T-cell (primary cell): ENCODE measurements at regions of chr1 and their contacts with region 1.

Region 1: GRCh38 chr1:95057351-95057750 is 15.4 kb downstream of the ALG14 start:
- DNase-seq: no peak
- ATAC-seq: no peak
- H3K4me3 ChIP-seq: no peak overlapping the region
- H3K4me3 Mint-ChIP-seq: no peak overlapping the region
- H3K27ac ChIP-seq: no peak overlapping the region
- H3K27ac Mint-ChIP-seq: no peak overlapping the region
- H3K4me1 ChIP-seq: no peaks in the 10 kb centered on the region
- H3K4me1 Mint-ChIP-seq: peaks cover 0 to 6% (median 0%) of the 10 kb centered on the region in 3 donors
- H3K27me3 ChIP-seq: no peaks in the 10 kb centered on the region
- H3K27me3 Mint-ChIP-seq: no peaks in the 10 kb centered on the region

Region 2: GRCh38 chr1:94989911-94990473 is 67.4 kb before region 1 on chr1:
- CTCF ChIA-PET with region 1: no interaction called
- POLR2A ChIA-PET with region 1: no interaction called
- DNase-seq: no peak
- ATAC-seq: no peak
- H3K4me3 ChIP-seq: no peak overlapping the region
- H3K4me3 Mint-ChIP-seq: no peak overlapping the region
- H3K27ac ChIP-seq: no peak overlapping the region
- H3K27ac Mint-ChIP-seq: no peak overlapping the region
- H3K4me1 ChIP-seq: peaks cover 0 to 7% of the 10 kb centered on the region in 2 experiments
- H3K4me1 Mint-ChIP-seq: peaks cover 7 to 18% (median 12%) of the 10 kb centered on the region in 3 donors
- H3K27me3 ChIP-seq: no peaks in the 10 kb centered on the region
- H3K27me3 Mint-ChIP-seq: no peaks in the 10 kb centered on the region

Region 3: GRCh38 chr1:95023399-95024043 is 33.8 kb before region 1 on chr1:
- CTCF ChIA-PET with region 1: no interaction called
- POLR2A ChIA-PET with region 1: no interaction called
- DNase-seq: no peak
- ATAC-seq: no peak
- H3K4me3 ChIP-seq: no peak overlapping the region
- H3K4me3 Mint-ChIP-seq: no peak overlapping the region
- H3K27ac ChIP-seq: no peak overlapping the region
- H3K27ac Mint-ChIP-seq: no peak overlapping the region
- H3K4me1 ChIP-seq: no peaks in the 10 kb centered on the region
- H3K4me1 Mint-ChIP-seq: no peaks in the 10 kb centered on the region
- H3K27me3 ChIP-seq: no peaks in the 10 kb centered on the region
- H3K27me3 Mint-ChIP-seq: no peaks in the 10 kb centered on the region

Region 4: GRCh38 chr1:95309031-95309471 is 251.7 kb after region 1 on chr1:
- CTCF ChIA-PET with region 1: no interaction called
- POLR2A ChIA-PET with region 1: interaction called in 1 of 2 experiments, 10 read pairs
- DNase-seq: no peak
- ATAC-seq: no peak
- H3K4me3 ChIP-seq: no peak overlapping the region
- H3K4me3 Mint-ChIP-seq: no peak overlapping the region
- H3K27ac ChIP-seq: no peak overlapping the region
- H3K27ac Mint-ChIP-seq: no peak overlapping the region
- H3K4me1 ChIP-seq: no peaks in the 10 kb centered on the region
- H3K4me1 Mint-ChIP-seq: no peaks in the 10 kb centered on the region
- H3K27me3 ChIP-seq: no peaks in the 10 kb centered on the region
- H3K27me3 Mint-ChIP-seq: peaks cover 17 to 21% of the 10 kb centered on the region in 2 donors